Lower leg skin (tissue), 4 donors: ENCODE measurements at regions of chr4 and their contacts with region 1.

Region 1: GRCh38 chr4:65737672-65738071 is 67.4 kb upstream of the EPHA5 start:
- DNase-seq: no peak
- H3K4me3 ChIP-seq: no peak overlapping the region
- CTCF ChIP-seq: no peak
- POLR2A ChIP-seq: no peak

Region 2: GRCh38 chr4:65880594-65880993 is 142.9 kb after region 1 on chr4:
- intact Hi-C with region 1: loop called (anchors 5 kb)
- DNase-seq: no peak
- H3K4me3 ChIP-seq: no peak overlapping the region
- CTCF ChIP-seq: no peak
- POLR2A ChIP-seq: no peak